Posterior cingulate gyrus (tissue), 11 donors: ENCODE measurements at regions of chr14 and their contacts with region 1.

Region 1: GRCh38 chr14:103576371-103577024 is 13.7 kb downstream of the COA8 start:
- DNase-seq: peak; percentile 47 to 97 (median 76)

Region 2: GRCh38 chr14:103628684-103629502 is 52.4 kb after region 1 on chr14 and contains the start of gene KLC1:
- intact Hi-C with region 1: loop called (anchors 5 kb)
- DNase-seq: peak; percentile 79 to 98 (median 88)

Region 3: DNA sequence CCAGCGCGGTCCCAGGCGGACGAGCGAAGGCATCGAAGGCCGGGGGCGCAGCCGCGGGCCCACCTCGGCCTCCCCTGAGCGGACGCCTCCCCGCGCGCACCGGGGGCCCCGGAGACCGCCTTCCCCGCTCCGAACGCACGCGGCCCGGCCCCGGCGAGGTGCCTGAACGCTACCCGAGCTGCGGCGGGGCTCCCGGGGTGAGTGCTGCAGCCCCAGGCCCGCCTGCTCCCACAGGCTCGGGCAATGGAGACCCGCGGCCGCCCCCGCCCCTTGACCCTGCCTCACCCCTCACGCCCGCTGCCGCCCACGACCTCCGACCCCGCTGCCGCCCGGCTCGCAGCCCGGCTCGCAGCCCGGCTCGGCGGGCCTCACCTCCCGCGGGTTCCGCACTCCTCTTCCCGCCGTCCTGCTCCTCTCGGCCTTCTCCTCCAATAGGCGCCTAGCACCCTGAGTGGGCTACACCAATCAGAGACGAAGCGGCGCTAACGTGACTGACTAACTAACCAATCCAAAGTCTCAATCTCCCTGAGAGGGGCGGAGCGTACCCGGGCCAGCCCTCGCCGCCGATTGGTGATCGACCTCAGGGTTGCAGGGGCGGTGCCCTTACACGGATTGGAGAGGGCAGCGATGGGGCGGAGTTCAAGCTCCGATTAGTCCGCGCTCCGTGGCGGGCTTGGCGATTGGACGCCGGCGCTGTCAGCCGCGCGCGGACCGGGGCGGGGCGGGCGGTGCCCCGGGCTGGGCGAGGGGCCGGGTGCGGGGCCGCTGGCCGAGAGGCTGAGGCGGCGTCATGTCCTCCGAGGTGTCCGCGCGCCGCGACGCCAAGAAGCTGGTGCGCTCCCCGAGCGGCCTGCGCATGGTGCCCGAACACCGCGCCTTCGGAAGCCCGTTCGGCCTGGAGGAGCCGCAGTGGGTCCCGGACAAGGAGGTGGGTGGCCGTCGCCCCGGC is 138.8 kb after region 1 on chr14 and contains the starts of genes XRCC3 and ZFYVE21:
- intact Hi-C with region 1: loop called (anchors 10 kb)
- DNase-seq: peak; percentile 97 to 100 (median 99)

Region 4: DNA sequence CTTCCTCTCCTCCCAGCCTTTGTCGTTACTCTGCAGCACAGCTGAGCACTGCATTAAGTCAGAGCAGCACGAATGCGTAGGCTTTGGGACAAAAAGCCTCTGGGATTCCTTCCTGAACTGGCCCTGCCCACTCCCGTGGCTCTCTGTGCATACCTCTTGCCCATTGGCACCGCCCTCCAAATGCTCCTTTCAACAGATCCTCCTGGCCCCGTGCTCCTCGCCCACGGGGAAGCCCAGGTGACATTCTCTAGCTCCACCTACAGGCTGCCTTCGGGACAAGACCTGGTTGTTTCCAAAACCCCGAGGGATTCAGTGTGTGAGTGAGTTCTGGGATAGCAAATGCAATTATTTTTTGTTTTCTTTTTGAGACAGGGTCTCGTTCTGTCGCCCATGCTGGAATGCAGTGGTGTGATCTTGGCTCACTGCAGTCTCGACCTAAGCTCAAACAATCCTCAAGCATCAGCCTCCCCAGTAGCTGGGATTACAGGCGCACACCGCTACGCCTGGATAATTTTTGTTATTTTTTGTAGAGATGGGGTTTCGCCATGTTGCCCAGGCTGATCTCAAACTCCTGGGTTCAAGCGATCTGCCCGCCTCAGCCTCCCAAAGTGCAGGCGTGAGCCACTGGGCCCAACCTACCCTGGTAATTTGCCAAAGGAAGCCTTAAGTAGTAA is 333.9 kb after region 1 on chr14:
- intact Hi-C with region 1: loop called (anchors 5 kb)
- DNase-seq: peak; percentile 54 to 97 (median 80)